Activated naive CD4-positive, alpha-beta T cell treated with anti-CD3 and anti-CD28 coated beads for 36 hours (primary cell): ENCODE measurements at regions of chrX and their contacts with region 1.

Region 1: DNA sequence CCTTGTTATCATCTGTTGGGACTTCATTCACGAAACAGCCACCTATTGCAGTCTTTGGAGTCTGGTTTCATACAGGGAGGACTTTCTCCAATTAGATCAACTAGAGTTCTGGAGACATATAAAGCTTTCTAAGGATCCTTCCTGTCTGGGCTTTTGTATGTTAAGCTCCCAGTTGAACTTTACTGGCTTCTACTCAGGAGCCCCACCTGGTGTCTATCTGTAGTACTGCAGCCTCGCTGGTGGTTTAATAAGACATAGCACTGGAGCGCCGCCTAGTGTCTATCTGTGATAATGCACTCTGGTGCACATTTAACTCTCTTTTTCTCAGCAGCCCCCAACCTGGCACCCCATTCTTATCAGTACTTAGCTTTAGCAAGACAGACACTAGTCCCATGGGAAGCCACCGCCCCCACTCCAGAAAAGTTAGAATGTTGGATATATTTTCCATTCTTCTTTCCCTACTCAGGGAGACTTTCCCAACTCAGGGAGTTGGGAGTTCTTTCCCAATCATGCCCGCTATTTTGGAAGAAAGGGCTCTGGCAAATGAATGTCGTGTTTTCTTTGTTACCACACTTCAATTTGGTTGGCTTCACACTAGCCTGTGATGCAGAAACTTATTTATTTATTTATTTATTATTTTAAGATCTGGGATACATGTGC is 36.9 kb upstream of the SYTL4 start:
- DNase-seq: peak; percentile 92
- H3K4me3 Mint-ChIP-seq: no peak overlapping the region
- H3K27ac Mint-ChIP-seq: no peak overlapping the region
- H3K4me1 Mint-ChIP-seq: no peaks in the 10 kb centered on the region
- H3K27me3 Mint-ChIP-seq: peaks cover 9% of the 10 kb centered on the region

Region 2: DNA sequence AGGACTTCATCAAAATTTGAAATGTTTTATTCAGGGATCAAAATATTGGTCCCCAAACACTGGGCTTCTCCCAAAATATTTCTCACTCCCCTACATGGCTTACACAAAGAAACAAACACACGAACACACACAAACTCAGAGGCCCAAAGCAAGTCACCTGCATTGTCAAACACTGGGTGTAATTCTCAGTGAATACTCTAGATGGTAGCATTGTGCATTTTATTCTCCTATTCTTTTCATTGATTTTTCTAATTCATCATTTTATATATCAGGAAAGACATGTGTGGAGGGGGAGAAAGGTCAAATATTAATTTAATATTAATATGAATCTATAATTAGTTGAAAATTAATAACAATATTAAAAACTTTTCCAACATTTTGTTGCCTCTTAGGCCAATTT is 256.3 kb before region 1 on chrX:
- CTCF ChIA-PET with region 1: interaction called, 20 read pairs
- intact Hi-C with region 1: loop called (anchors 1 kb)
- DNase-seq: no peak
- H3K4me3 Mint-ChIP-seq: no peak overlapping the region
- H3K27ac Mint-ChIP-seq: no peak overlapping the region
- H3K4me1 Mint-ChIP-seq: no peaks in the 10 kb centered on the region
- H3K27me3 Mint-ChIP-seq: no peaks in the 10 kb centered on the region

Region 3: GRCh38 chrX:100674705-100675104 is 94.1 kb before region 1 on chrX:
- CTCF ChIA-PET with region 1: interaction called, 18 read pairs
- intact Hi-C with region 1: loop called (anchors 1 kb)
- DNase-seq: no peak
- H3K4me3 Mint-ChIP-seq: no peak overlapping the region
- H3K27ac Mint-ChIP-seq: no peak overlapping the region
- H3K4me1 Mint-ChIP-seq: peaks cover 6% of the 10 kb centered on the region
- H3K27me3 Mint-ChIP-seq: no peaks in the 10 kb centered on the region

Region 4: DNA sequence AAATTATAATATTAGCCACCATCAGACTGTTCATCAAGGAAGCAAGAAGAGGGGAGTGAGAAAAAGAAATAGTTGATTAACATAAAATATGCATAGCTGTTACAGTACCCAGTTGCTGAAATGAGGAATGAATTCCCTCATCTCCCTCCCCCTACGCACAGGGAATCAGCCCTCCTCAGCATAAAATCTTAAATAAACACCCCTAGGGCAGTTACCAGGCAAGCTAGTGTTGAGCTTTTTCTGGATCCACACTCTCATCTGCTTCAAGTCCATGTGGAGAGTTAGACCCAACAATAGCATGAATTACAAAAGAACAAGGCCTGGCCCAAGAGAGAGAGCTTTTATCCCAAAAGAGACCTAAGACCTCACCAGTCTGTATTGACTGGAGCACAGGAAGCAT is 17.9 kb before region 1 on chrX:
- CTCF ChIA-PET with region 1: interaction called, 13 read pairs
- intact Hi-C with region 1: no loop called
- DNase-seq: no peak
- H3K4me3 Mint-ChIP-seq: no peak overlapping the region
- H3K27ac Mint-ChIP-seq: no peak overlapping the region
- H3K4me1 Mint-ChIP-seq: no peaks in the 10 kb centered on the region
- H3K27me3 Mint-ChIP-seq: peaks cover 14% of the 10 kb centered on the region

Region 5: DNA sequence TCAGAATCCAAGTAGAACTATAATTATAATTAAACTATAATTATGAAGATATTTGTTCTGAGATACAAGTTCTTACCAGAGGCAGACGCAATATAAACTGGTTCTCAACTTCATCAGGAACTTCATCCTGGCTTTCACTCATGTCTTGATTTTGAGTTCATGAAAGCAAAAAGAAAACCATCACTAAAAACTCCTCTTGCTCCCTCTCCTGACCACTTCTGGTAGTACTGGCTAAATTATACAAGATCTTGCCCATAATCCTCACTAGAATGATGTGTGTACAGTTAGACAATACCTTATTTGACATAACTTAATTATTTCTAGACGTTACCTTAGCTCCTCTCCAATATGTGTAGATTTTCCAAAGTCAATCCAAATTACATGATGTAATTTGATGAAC is 518.6 kb after region 1 on chrX:
- CTCF ChIA-PET with region 1: no interaction called
- intact Hi-C with region 1: loop called (anchors 5 kb)
- DNase-seq: peak; percentile 6
- H3K4me3 Mint-ChIP-seq: no peak overlapping the region
- H3K27ac Mint-ChIP-seq: no peak overlapping the region
- H3K4me1 Mint-ChIP-seq: no peaks in the 10 kb centered on the region
- H3K27me3 Mint-ChIP-seq: peaks cover 1% of the 10 kb centered on the region